Left cardiac atrium (tissue), 4 donors: ENCODE measurements at regions of chrX and their contacts with region 1.

Region 1: DNA sequence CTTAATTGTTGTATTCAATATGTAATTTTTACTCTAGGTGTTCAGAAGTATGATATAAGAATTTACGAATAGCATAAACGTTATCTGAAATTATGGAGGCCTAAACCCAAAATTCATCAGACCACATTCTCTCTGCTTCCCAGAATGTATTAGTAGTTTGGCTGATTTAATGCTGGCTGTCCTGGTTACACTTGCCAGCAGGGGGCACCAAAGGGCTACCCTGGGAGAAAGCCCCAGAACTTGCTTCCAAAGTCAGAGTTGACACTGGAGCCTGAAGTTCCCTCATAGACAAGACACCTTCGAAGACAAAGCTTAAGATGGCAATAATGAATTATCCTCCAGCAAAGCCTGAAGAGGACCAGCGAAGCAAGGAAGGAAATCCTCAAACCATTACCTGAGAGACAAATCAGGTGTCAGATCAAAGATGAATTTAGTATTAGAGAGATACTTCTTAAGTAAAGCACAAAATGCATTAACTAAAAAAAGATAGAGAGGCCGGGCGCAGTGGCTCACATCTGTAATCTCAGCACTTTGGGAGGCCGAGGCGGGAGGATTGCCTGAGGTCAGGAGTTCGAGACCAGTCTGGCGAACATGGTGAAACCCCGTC is 11.3 kb upstream of the ANOS1 start:
- DNase-seq: peak; percentile 42
- ATAC-seq: no peak

Region 2: GRCh38 chrX:7996414-7996813 is 746.8 kb before region 1 on chrX:
- intact Hi-C with region 1: loop called (anchors 2 to 10 kb)
- DNase-seq: no peak
- ATAC-seq: no peak

Region 3: DNA sequence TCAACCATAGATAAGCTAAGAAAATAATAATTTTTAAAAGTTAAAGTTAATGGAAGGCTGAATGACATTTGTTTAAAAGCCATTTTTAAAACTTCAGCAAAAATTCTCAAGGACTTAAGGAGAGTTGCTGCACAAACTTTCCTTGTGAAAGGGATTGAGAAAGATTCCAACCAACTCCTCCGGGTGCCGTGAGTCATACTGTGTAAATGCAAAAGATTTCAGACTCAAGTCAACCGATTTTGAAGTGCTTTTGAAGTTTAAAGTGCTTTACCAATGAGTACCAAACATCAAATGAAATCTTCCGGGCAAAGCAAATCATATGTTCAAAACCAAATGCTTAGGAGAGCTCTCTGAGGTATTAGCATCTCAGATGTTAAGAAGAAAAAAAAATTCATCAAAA is 603.5 kb before region 1 on chrX:
- intact Hi-C with region 1: no loop called
- DNase-seq: no peak
- ATAC-seq: no peak

Region 4: GRCh38 chrX:8179656-8180055 is 563.6 kb before region 1 on chrX:
- intact Hi-C with region 1: loop called in 1 of 2 experiments (anchors 10 kb)
- DNase-seq: no peak
- ATAC-seq: no peak

Region 5: DNA sequence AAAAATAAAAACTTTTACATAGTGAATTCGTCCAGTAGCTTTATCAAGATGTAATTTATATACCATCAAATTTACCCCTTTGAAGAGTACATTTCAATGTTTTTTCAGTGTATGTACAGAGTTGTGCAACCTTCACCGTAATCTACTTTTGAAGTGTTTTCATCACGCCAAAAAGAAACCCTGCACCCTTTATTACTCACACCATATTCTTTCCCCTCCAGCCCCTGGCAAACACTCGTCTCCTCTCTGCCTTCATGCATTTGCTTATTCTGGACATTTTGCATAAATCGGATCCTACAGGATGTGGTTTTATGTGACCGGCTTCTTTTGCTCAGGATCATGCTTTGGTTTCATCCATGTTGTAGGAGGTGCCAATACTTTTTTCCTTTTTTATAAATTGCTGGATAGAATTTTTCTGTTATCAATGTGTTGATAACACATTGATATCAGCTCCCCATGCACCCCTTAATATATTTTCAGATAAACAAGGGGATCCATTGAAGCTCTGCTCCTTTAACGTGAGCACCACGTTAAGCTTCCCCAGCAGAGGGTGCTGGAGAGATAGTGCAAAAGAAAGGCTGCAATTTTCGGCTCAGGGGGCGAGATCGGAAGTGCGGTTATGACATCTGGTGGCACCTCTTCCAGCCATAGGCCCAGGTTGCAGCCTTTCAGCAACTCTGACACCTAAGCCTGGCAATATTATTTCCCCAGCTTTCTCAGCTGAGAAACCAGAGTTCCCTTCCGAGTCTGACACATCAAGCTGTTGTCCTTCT is 378.7 kb before region 1 on chrX:
- intact Hi-C with region 1: loop called (anchors 5 to 10 kb)
- DNase-seq: peak; percentile 28
- ATAC-seq: no peak

Region 6: GRCh38 chrX:8573740-8574139 is 169.5 kb before region 1 on chrX:
- intact Hi-C with region 1: no loop called
- DNase-seq: no peak
- ATAC-seq: no peak

Region 7: GRCh38 chrX:8783100-8784098 is 40.2 kb after region 1 on chrX:
- intact Hi-C with region 1: no loop called
- DNase-seq: no peak
- ATAC-seq: no peak

Region 8: DNA sequence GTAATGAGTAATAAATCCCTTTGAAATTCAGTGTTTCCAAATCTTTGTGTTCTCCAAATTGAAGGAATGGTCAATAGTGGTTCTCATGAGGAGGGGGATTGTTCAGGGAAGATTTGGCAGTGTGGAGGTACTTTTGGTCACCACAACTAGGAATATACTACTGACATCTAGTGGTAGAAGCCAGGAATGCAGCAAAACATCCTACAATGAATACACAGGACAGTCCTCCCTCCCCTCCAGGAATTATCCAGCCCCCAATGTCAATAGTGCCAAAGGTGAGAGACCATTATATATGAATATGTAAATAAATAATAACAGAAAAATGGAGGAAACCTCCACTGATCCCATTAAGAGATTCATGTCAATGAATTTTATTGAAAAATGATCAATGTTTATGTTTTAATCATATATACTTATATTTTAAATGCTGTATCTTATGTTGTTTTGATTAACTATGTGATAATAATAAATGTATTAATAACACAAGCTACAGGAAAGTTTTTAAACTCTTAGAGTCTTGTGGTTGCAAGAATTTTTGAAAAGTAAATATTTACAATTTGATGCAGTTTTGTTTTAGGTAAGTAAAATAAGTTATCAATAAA is 72.3 kb after region 1 on chrX:
- intact Hi-C with region 1: loop called in 1 of 2 experiments (anchors 10 kb)
- DNase-seq: no peak
- ATAC-seq: no peak

Region 9: GRCh38 chrX:9396930-9397329 is 653.7 kb after region 1 on chrX:
- intact Hi-C with region 1: no loop called
- DNase-seq: no peak
- ATAC-seq: no peak